ENCODE measurements at regions of chr15 and their contacts with region 1.

Region 1: DNA sequence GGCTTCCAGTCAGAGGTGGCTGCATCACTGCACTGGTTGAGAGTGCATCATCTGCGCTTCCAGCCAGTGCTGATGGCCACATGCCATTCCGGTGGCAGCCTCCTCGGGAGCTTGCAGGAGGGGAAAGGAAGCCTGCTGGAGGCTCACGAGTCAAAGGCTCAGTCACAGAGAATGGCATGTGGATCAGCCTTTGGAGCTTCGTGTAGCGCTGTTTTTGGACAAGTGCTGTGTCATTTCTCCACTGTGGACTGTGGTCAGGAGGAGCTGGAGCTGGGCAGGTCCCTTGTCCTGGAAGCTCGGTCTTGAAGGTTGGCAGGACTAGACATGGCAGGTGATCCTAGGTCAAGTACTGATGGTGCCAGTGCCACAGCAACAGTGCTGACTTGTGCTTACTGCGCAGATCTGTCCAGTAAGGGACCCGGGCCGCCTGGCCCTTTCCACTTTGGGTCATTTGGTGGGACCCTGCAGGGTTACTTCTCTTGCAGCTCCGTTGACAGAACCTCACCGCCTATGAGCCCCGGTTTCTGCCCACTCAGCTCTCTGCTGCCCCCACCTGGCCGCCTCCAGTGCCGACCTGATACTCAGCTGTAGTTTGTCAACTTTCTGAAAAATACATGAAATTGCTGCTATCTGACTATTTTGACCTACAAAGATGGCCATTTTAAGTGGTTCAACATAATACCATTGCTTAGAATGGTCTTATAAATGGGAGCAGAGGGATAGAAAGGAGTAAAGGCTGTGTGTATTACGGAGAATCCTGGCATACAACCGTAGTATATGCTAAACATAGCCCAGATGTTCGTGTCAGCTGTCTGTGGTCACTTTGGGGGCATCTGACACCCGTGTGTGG is 27.6 kb upstream of the TRPM1 start:
- DNase-seq: peak; percentile 35 to 49
- H3K4me3 ChIP-seq: no peak overlapping the region
- H3K27ac ChIP-seq: no peak overlapping the region
- H3K4me1 ChIP-seq: no peaks in the 10 kb centered on the region
- H3K27me3 ChIP-seq: peaks cover 25% of the 10 kb centered on the region; the same call in 1 of the 2 replicates
- CTCF ChIP-seq: peak; percentile 83

Region 2: GRCh38 chr15:30670056-30670455 is 459.1 kb before region 1 on chr15:
- CTCF ChIA-PET with region 1: no interaction called
- POLR2A ChIA-PET with region 1: no interaction called
- intact Hi-C with region 1: loop called (anchors 10 kb)
- DNase-seq: no peak
- H3K4me3 ChIP-seq: no peak overlapping the region
- H3K27ac ChIP-seq: no peak overlapping the region
- H3K4me1 ChIP-seq: no peaks in the 10 kb centered on the region
- H3K27me3 ChIP-seq: no peaks in the 10 kb centered on the region
- CTCF ChIP-seq: no peak

Region 3: GRCh38 chr15:30791239-30792175 is 337.6 kb before region 1 on chr15:
- CTCF ChIA-PET with region 1: no interaction called
- POLR2A ChIA-PET with region 1: no interaction called
- intact Hi-C with region 1: loop called (anchors 5 kb)
- DNase-seq: peak in 1 of 2 experiments; percentile 34
- H3K4me3 ChIP-seq: no peak overlapping the region
- H3K27ac ChIP-seq: no peak overlapping the region
- H3K4me1 ChIP-seq: no peaks in the 10 kb centered on the region
- H3K27me3 ChIP-seq: peaks cover 16% of the 10 kb centered on the region
- CTCF ChIP-seq: no peak

Region 4: GRCh38 chr15:30895461-30896210 is 233.5 kb before region 1 on chr15:
- CTCF ChIA-PET with region 1: interaction called, 5 read pairs
- POLR2A ChIA-PET with region 1: no interaction called
- intact Hi-C with region 1: loop called (anchors 2 kb)
- DNase-seq: no peak
- H3K4me3 ChIP-seq: no peak overlapping the region
- H3K27ac ChIP-seq: no peak overlapping the region
- H3K4me1 ChIP-seq: no peaks in the 10 kb centered on the region
- H3K27me3 ChIP-seq: no peaks in the 10 kb centered on the region
- CTCF ChIP-seq: no peak